ENCODE measurements at regions of chr1 and their contacts with region 1.

Region 1: DNA sequence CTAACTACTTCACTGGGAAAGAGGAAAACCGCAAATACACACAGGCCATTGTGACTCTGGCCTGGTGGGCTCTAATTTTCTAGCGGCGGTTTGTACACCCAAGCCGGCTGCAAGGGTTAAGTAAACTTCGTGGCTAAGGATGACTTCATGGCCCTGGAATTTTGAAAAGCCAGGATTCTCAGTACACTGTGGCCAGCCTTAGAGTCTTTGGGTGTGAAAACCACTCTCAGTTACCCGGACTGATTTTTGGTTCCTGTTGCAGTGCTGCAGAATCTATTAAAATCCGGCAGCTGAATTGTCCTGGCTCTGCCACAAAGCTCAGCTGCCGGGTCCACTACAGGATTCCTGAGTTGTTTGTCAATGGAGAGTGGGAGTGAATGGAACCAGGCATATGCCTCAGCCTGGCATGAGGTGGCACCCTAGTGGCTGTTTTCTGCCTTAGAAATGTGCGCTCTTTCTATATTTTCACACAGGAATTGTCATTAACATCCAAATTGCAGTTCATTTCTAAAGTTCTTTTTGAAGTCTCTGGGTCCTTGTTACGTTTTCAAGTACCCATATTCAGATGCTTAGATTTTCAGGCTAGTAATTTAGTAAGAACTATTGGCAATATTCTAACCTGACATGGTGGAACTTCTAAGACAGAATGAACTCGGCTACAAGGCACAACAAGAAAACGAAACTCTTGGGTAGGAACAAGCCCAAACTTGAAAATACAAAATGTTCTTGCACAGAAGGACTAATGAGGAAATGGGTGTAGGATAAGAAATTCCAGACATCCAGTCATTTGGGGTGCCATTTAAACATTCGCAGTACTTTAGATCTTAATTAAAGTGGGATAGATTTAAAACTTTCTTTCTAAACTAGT is 255.9 kb downstream of the NFIA start:
- DNase-seq: peak; percentile 91
- H3K4me3 Mint-ChIP-seq: peak overlapping the region; percentile 70
- H3K27ac Mint-ChIP-seq: peak overlapping the region; percentile 96
- H3K4me1 Mint-ChIP-seq: peaks cover 28% of the 10 kb centered on the region
- H3K27me3 Mint-ChIP-seq: no peaks in the 10 kb centered on the region
- CTCF ChIP-seq: peak; percentile 81

Region 2: DNA sequence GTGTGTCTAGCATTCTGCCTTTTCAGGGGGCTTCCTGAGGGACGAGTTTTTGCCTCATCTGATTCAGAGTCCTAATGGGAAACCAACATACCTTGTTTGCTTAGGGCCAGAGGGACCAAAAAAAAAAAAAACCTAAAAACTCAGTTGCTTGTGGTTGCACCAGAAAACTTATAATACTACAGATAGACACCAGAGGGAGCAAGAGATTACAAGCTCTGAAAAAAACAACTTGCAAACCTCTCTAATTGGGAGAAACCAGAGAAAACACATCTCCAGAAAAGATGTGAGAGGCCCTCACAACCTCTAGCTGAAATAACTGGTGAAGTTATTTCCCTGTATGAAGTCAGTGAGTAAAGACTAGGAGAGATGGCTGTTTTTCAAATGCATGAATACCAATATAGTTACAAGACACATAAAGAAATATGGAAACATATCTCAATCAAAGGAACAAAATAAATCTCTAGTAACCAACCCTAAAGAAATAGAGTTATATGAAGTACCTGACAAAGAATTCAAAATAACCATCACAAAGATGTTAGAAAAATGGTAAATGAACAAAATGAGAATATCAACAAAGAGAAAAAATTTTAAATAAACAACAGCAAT is 489.5 kb before region 1 on chr1:
- CTCF ChIA-PET with region 1: no interaction called
- POLR2A ChIA-PET with region 1: no interaction called
- intact Hi-C with region 1: loop called (anchors 5 kb)
- DNase-seq: peak; percentile 38
- H3K4me3 Mint-ChIP-seq: no peak overlapping the region
- H3K27ac Mint-ChIP-seq: no peak overlapping the region
- H3K4me1 Mint-ChIP-seq: peaks cover 13% of the 10 kb centered on the region
- H3K27me3 Mint-ChIP-seq: peaks cover 20% of the 10 kb centered on the region
- CTCF ChIP-seq: peak; percentile 71

Region 3: GRCh38 chr1:61083807-61084440 is 254.3 kb before region 1 on chr1:
- CTCF ChIA-PET with region 1: interaction called, 41 read pairs
- POLR2A ChIA-PET with region 1: interaction called, 96 read pairs
- intact Hi-C with region 1: loop called (anchors 1 kb)
- DNase-seq: peak; percentile 36
- H3K4me3 Mint-ChIP-seq: peak overlapping the region; percentile 88
- H3K27ac Mint-ChIP-seq: peak overlapping the region; percentile 96
- H3K4me1 Mint-ChIP-seq: peaks cover 29% of the 10 kb centered on the region
- H3K27me3 Mint-ChIP-seq: no peaks in the 10 kb centered on the region
- CTCF ChIP-seq: no peak

Region 4: DNA sequence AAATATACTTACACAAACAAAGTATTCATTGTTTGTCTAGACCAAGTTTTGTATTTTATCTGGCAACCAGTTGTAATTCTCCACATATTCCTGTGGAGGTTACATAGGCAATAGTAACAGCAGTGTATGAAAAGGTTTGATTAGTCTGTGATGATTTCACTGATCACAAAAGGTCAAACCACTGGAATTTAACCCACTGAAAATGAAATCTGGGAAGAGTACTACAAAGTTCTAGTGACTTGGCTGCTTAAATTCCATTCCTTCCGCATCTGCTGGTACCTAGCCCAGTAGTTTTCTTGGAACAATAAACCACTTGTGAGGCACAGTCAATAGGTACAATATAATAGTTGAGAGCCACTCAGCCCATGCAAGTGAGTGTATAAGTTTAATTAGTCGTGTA is 50.5 kb before region 1 on chr1:
- CTCF ChIA-PET with region 1: interaction called, 14 read pairs
- POLR2A ChIA-PET with region 1: interaction called, 7 read pairs
- intact Hi-C with region 1: loop called (anchors 2 kb)
- DNase-seq: peak; percentile 57
- H3K4me3 Mint-ChIP-seq: no peak overlapping the region
- H3K27ac Mint-ChIP-seq: peak overlapping the region; percentile 53
- H3K4me1 Mint-ChIP-seq: peaks cover 43% of the 10 kb centered on the region
- H3K27me3 Mint-ChIP-seq: no peaks in the 10 kb centered on the region
- CTCF ChIP-seq: no peak

Region 5: GRCh38 chr1:61588736-61589672 is 250.8 kb after region 1 on chr1:
- CTCF ChIA-PET with region 1: interaction called, 6 read pairs
- POLR2A ChIA-PET with region 1: interaction called, 3 read pairs
- intact Hi-C with region 1: loop called (anchors 5 kb)
- DNase-seq: peak; percentile 80
- H3K4me3 Mint-ChIP-seq: no peak overlapping the region
- H3K27ac Mint-ChIP-seq: no peak overlapping the region
- H3K4me1 Mint-ChIP-seq: peaks cover 25% of the 10 kb centered on the region
- H3K27me3 Mint-ChIP-seq: no peaks in the 10 kb centered on the region
- CTCF ChIP-seq: peak; percentile 80